ENCODE measurements at regions of chr5 and their contacts with region 1.

Region 1: DNA sequence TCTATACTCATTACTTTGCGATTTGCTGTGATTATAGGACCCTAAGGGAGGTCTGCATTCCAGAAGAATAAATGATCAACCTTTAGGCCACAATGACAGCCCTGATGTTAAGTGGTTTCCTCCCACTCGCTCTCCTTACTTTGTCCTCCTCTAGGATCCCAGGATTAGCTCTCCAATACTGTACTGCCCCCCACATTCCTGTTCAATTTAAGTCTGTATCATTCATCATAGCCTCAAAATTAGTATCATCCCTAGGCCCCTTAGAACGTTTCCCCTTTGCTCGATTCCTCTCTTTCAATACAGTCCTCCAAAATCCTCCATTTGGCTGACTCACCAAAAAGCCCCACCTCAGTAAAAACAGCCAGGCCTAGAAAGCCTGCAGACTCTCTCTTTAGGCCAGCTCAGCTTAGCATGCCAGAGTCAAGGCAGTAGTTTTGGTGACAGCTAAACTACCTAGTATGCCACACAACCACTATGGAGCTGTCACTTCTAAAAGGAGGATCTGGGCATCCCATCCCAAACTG is 24.4 kb downstream of the RNF145 start:
- DNase-seq: no peak
- H3K4me3 ChIP-seq: no peak overlapping the region
- H3K4me3 Mint-ChIP-seq: peak overlapping the region in 1 of 8 donors; percentile 13
- H3K27ac ChIP-seq: no peak overlapping the region
- H3K27ac Mint-ChIP-seq: peak overlapping the region; percentile 6 to 89 (median 78)
- H3K4me1 ChIP-seq: peaks cover 50% of the 10 kb centered on the region
- H3K4me1 Mint-ChIP-seq: peaks cover 38 to 70% (median 57%) of the 10 kb centered on the region in 4 donors
- H3K27me3 ChIP-seq: no peaks in the 10 kb centered on the region
- H3K27me3 Mint-ChIP-seq: no peaks in the 10 kb centered on the region

Region 2: GRCh38 chr5:159198063-159199036 is 13.4 kb after region 1 on chr5:
- CTCF ChIA-PET with region 1: interaction called, 4 read pairs
- POLR2A ChIA-PET with region 1: interaction called, 10 read pairs
- intact Hi-C with region 1: no loop called
- DNase-seq: peak in 4 of 5 donors; percentile 23 to 33 (median 32)
- H3K4me3 ChIP-seq: no peak overlapping the region
- H3K4me3 Mint-ChIP-seq: peak overlapping the region in 7 of 8 donors; percentile 1 to 56 (median 32)
- H3K27ac ChIP-seq: no peak overlapping the region
- H3K27ac Mint-ChIP-seq: peak overlapping the region; percentile 17 to 84 (median 63)
- H3K4me1 ChIP-seq: peaks cover 49% of the 10 kb centered on the region
- H3K4me1 Mint-ChIP-seq: peaks cover 49 to 83% (median 68%) of the 10 kb centered on the region in 4 donors
- H3K27me3 ChIP-seq: no peaks in the 10 kb centered on the region
- H3K27me3 Mint-ChIP-seq: no peaks in the 10 kb centered on the region